ENCODE measurements at regions of chr4 and their contacts with region 1.

Region 1: DNA sequence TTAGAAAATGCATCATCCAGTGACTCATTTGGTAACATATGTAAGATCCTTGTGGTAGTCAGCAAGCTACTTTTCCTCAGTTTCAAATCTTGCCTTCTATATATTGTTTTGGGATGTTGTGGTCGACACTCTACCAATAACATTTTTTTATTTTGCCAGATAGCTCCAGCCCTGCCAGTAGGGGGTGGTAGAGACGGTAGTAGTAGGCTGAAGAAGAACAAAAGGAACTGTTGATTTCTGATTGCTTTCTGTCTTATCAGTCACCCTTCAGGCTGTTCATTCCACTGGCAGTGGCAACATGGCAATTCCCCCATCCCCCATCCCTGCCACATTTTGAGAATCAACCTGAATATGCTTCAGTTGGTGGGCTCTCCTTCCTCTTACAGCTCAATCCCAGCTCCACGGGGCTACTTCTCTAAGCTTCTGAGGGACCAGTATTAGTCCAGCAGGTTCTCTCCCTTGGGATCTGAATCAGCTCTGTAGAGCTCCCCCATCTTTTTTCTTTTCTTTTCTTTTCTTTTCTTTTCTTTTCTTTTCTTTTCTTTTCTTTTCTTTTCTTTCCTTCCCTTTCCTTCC is 171.5 kb upstream of the VEGFC start:
- DNase-seq: peak; percentile 52
- H3K4me3 Mint-ChIP-seq: no peak overlapping the region
- H3K27ac Mint-ChIP-seq: no peak overlapping the region
- H3K4me1 Mint-ChIP-seq: no peaks in the 10 kb centered on the region
- H3K27me3 Mint-ChIP-seq: no peaks in the 10 kb centered on the region
- CTCF ChIP-seq: peak; percentile 29

Region 2: GRCh38 chr4:176927664-176928063 is 36.5 kb before region 1 on chr4:
- CTCF ChIA-PET with region 1: no interaction called
- intact Hi-C with region 1: no loop called
- DNase-seq: no peak
- H3K4me3 Mint-ChIP-seq: no peak overlapping the region
- H3K27ac Mint-ChIP-seq: no peak overlapping the region
- H3K4me1 Mint-ChIP-seq: peaks cover 7% of the 10 kb centered on the region
- H3K27me3 Mint-ChIP-seq: no peaks in the 10 kb centered on the region
- CTCF ChIP-seq: no peak

Region 3: GRCh38 chr4:177047070-177047850 is 83.1 kb after region 1 on chr4:
- CTCF ChIA-PET with region 1: interaction called, 46 read pairs
- intact Hi-C with region 1: loop called (anchors 2 kb)
- DNase-seq: peak; percentile 73
- H3K4me3 Mint-ChIP-seq: no peak overlapping the region
- H3K27ac Mint-ChIP-seq: no peak overlapping the region
- H3K4me1 Mint-ChIP-seq: no peaks in the 10 kb centered on the region
- H3K27me3 Mint-ChIP-seq: no peaks in the 10 kb centered on the region
- CTCF ChIP-seq: peak; percentile 59

Region 4: DNA sequence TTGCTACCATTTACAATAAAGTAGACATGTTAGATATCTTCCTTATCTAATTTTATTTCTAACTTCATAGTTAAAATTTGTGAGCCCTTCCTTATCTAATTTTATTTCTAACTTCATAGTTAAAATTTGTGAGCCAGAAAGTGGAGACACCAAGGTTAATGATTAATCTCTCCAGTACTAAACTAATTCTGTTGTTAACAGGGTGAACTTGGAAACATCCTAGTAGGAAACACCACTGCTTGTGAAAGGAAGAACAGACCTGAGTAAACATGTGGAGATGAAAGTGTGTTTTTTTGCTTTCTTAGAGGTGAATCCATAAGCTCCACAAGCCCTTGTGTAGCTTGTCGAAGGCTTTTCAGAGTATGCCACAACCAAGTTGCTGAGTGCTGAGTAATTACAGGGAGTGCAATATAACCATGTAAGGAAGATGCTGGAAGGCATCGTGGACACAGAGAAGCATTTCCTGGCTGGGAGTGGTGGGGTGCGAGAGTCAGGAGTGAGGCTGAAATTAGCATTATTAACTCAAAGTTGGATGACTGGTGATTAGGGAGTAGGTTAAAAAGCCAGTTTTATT is 226.9 kb after region 1 on chr4:
- CTCF ChIA-PET with region 1: no interaction called
- intact Hi-C with region 1: no loop called
- DNase-seq: no peak
- H3K4me3 Mint-ChIP-seq: no peak overlapping the region
- H3K27ac Mint-ChIP-seq: no peak overlapping the region
- H3K4me1 Mint-ChIP-seq: peaks cover 10% of the 10 kb centered on the region
- H3K27me3 Mint-ChIP-seq: no peaks in the 10 kb centered on the region
- CTCF ChIP-seq: no peak

Region 5: GRCh38 chr4:177434626-177435025 is 470.4 kb after region 1 on chr4:
- CTCF ChIA-PET with region 1: no interaction called
- intact Hi-C with region 1: no loop called
- DNase-seq: no peak
- H3K4me3 Mint-ChIP-seq: no peak overlapping the region
- H3K27ac Mint-ChIP-seq: no peak overlapping the region
- H3K4me1 Mint-ChIP-seq: no peaks in the 10 kb centered on the region
- H3K27me3 Mint-ChIP-seq: no peaks in the 10 kb centered on the region
- CTCF ChIP-seq: no peak